Thyroid gland (tissue), 4 donors: ENCODE measurements at regions of chr2 and their contacts with region 1.

Region 1: GRCh38 chr2:149954981-149955600 is 367.5 kb upstream of the MMADHC start:
- DNase-seq: no peak
- H3K4me3 ChIP-seq: no peak overlapping the region
- H3K27ac ChIP-seq: no peak overlapping the region
- H3K4me1 ChIP-seq: no peaks in the 10 kb centered on the region
- H3K27me3 ChIP-seq: no peaks in the 10 kb centered on the region
- CTCF ChIP-seq: no peak
- POLR2A ChIP-seq: no peak

Region 2: DNA sequence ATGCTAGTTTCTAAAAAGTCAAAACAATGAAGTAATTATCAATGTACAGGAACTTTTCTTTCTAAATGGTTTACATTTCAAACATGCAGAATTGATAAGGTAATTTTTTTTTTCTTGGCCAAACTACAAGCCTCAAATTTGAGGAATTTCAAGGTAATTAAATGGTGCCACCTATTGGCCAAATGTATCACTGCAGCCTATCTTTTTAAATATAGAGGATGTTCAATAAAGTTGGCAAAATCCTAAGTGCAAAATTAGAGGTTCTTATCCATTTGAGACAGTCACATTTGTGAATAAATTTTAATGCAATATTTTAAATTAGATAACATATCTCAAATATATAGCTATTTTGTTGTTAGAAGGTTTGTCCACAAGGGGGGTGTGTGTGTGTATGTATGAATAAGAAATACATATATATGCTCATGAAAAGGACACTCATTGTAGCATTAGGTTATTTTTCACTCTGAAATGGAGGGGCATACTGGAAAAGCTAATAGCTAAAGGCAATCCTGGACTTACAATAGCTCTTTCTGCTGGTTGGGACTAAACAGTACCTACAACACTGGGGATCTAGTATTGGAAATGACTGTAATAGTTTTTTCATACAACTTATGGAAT is 393.7 kb before region 1 on chr2:
- intact Hi-C with region 1: no loop called
- DNase-seq: no peak
- H3K4me3 ChIP-seq: no peak overlapping the region
- H3K27ac ChIP-seq: no peak overlapping the region
- H3K4me1 ChIP-seq: peaks cover 0 to 8% of the 10 kb centered on the region in 2 donors
- H3K27me3 ChIP-seq: no peaks in the 10 kb centered on the region
- CTCF ChIP-seq: peak; percentile 39 to 93 (median 78)
- POLR2A ChIP-seq: no peak

Region 3: DNA sequence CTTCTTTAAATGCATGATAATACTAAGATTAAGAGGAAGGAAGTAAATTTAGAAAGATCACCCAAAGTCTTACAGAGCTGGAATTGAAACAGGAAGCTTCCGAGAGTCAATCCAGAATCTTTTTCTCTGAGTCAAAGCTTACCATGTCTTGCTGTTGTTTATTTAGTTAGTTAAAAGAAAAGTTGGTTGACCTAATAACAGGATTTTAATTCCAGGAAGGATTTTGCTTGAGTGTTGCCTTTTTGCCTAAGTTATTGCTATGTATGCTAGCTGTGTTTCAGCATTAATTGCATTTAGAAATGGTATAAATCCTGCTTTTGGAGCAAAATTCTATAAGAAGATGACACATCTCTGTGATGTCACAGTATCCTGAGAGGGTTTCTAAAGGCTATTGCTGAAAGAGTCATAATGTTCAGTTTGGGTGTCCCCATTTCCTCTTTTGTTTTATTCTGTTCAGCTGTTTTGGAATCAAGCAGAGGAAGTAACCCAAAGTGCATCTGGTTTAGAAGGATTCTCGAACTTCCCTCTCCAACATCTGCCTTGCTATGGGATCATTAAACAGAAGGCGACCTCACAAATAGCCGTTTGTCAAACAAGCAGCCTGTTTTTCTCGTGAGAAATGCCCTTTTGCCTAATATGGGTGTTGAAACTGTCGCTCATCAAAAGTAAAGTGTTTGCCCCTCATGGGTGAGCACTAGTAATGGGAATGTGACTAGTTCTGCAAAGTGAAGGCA is 96.0 kb before region 1 on chr2:
- intact Hi-C with region 1: loop called (anchors 5 kb)
- DNase-seq: no peak
- H3K4me3 ChIP-seq: no peak overlapping the region
- H3K27ac ChIP-seq: no peak overlapping the region
- H3K4me1 ChIP-seq: peaks cover 0 to 5% of the 10 kb centered on the region in 2 donors
- H3K27me3 ChIP-seq: no peaks in the 10 kb centered on the region
- CTCF ChIP-seq: no peak
- POLR2A ChIP-seq: no peak

Region 4: GRCh38 chr2:149894760-149895159 is 60.3 kb before region 1 on chr2:
- intact Hi-C with region 1: no loop called
- DNase-seq: no peak
- H3K4me3 ChIP-seq: no peak overlapping the region
- H3K27ac ChIP-seq: no peak overlapping the region
- H3K4me1 ChIP-seq: peaks cover 0 to 5% of the 10 kb centered on the region in 2 donors
- H3K27me3 ChIP-seq: no peaks in the 10 kb centered on the region
- CTCF ChIP-seq: no peak
- POLR2A ChIP-seq: no peak

Region 5: GRCh38 chr2:150097891-150098595 is 143.0 kb after region 1 on chr2:
- intact Hi-C with region 1: no loop called
- DNase-seq: no peak
- H3K4me3 ChIP-seq: no peak overlapping the region
- H3K27ac ChIP-seq: no peak overlapping the region
- H3K4me1 ChIP-seq: peaks cover 9 to 10% of the 10 kb centered on the region in 2 donors
- H3K27me3 ChIP-seq: no peaks in the 10 kb centered on the region
- CTCF ChIP-seq: no peak
- POLR2A ChIP-seq: no peak

Region 6: DNA sequence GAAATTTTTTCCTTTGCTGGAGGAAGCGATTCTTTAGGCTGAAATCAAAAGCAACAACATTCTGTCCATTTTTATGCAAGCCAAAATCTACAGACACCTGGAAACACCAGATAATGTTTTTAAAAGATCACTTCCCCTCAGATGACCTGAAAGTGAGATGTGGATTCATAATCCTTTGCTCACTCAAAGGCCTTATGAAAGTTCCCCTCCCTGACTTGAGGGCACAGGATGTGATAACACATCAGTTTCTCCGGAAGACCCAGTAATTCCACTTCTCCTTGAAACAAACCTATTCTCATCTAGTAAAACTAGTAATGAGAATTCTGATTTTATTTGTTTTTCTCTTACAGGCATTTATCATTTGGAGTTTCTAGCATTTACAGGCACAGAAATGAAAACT is 750.7 kb after region 1 on chr2:
- intact Hi-C with region 1: no loop called
- DNase-seq: no peak
- H3K4me3 ChIP-seq: no peak overlapping the region
- H3K27ac ChIP-seq: no peak overlapping the region
- H3K4me1 ChIP-seq: no peaks in the 10 kb centered on the region
- H3K27me3 ChIP-seq: no peaks in the 10 kb centered on the region
- CTCF ChIP-seq: no peak
- POLR2A ChIP-seq: no peak